ENCODE measurements at regions of chr3 and their contacts with region 1.

Region 1: GRCh38 chr3:89098964-89099585 is 8.3 kb upstream of the EPHA3 start:
- DNase-seq: peak; percentile 79
- ATAC-seq: peak; percentile 73
- H3K4me3 ChIP-seq: no peak overlapping the region
- H3K27ac ChIP-seq: no peak overlapping the region
- H3K4me1 ChIP-seq: 0 out of 2 replicates have a peak, but pooled peaks cover 3% of the 10 kb centered on the region
- H3K27me3 ChIP-seq: peaks cover 6% of the 10 kb centered on the region; the same call in 1 of the 2 replicates
- CTCF ChIP-seq: peak; percentile 96

Region 2: DNA sequence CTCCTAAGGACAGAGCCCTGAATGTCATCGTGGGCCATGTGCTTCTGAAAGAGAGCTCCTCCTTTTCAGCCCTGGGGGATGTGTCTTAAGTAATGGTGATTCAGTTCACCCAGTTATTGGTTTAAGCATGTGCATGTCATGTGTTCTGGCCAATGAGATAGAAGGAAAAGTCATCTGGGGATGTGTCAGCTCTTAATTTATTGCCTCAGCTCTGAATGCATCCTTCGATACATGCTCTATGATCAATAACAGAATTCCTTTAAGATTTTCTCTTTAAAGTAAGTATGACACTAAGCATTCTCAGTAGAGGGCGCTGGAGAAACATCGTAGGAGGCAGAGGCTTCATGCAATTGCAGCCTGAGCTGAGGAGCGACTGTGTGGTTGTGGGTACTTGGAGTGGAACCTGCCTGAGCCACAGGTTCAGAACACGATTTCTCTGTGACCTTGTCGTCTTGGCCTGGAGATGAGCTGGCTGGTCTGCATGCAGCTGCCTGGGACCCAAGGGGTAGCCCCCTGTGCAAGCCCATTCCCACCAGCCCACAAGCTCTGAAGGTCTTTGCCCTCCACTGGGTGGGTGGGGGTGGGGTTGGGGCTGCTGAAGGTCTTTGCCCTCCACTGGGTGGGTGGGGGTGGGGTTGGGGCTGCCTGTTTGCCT is 879.8 kb before region 1 on chr3:
- CTCF ChIA-PET with region 1: no interaction called
- POLR2A ChIA-PET with region 1: no interaction called
- intact Hi-C with region 1: loop called (anchors 5 kb)
- DNase-seq: peak; percentile 76
- ATAC-seq: peak; percentile 82
- H3K4me3 ChIP-seq: no peak overlapping the region
- H3K27ac ChIP-seq: no peak overlapping the region
- H3K4me1 ChIP-seq: no peaks in the 10 kb centered on the region
- H3K27me3 ChIP-seq: peaks cover 15% of the 10 kb centered on the region; the same call in 1 of the 2 replicates
- CTCF ChIP-seq: peak; percentile 82

Region 3: DNA sequence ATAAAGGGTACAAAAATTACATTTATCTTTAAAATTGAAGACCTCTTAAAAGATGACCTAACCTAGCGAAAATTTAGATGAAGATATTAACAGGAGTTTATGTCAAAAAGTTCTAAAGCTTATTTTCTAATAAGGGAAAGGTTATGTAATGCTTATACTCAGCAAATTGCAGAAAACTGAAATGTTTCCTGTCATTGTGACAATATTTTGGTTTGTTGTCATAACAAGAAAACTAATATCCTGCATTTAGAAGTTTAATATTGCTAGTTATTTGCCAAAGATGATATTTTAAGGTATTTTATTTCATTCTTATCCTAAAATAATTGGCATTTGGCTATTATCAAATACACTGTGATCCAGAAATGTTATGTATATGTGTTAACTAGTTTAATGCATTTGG is 654.8 kb before region 1 on chr3:
- CTCF ChIA-PET with region 1: no interaction called
- POLR2A ChIA-PET with region 1: no interaction called
- intact Hi-C with region 1: no loop called
- DNase-seq: no peak
- ATAC-seq: no peak
- H3K4me3 ChIP-seq: no peak overlapping the region
- H3K27ac ChIP-seq: no peak overlapping the region
- H3K4me1 ChIP-seq: no peaks in the 10 kb centered on the region
- H3K27me3 ChIP-seq: peaks cover 5% of the 10 kb centered on the region; the same call in 1 of the 2 replicates
- CTCF ChIP-seq: no peak

Region 4: DNA sequence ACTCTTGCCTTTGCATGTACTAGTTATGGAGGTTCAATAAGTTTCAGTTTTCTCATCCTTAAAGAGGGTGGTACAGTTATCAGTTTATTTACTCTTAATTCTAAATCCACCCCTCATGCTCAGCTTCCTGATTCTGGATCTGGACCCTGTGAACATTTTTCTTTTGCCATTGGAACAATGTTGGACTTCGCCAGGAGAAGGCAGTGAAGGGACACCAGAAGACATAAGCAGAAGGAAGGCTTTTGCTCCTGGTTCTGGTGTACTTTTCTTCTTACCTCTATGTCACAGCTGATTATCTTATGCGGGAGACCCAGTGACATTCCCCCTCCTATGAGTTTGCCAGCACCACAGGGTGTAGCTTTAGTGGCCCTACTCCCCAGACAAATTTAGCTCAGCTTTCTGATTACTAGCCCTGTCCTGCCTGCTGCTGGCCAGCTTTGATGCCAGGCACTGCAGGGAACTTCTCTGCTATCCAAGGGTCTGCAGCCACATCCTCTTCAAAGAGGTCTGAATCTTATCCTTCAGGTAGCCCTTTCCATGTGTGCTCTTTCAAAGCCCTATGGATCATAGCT is 458.0 kb before region 1 on chr3:
- CTCF ChIA-PET with region 1: no interaction called
- POLR2A ChIA-PET with region 1: no interaction called
- intact Hi-C with region 1: loop called (anchors 10 kb)
- DNase-seq: no peak
- ATAC-seq: no peak
- H3K4me3 ChIP-seq: no peak overlapping the region
- H3K27ac ChIP-seq: no peak overlapping the region
- H3K4me1 ChIP-seq: no peaks in the 10 kb centered on the region
- H3K27me3 ChIP-seq: no peaks in the 10 kb centered on the region
- CTCF ChIP-seq: no peak

Region 5: DNA sequence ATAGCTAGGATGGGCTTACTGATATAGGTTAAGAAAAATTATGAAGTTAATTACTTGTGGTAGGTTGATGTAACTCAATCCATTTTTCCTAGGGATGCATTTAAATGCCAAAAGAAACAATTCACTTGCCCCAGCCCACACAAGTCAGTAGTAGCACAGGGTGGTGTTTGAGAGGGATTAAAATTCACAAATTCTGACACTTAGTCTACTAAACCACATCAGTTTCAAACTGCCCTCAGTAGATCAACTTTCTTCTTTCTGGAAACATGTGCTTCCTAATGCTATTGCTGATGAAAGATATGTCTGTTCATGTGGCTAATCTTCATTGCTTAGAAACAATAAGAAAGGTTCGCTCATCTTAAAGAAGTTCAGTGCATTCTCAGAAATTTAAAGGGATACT is 169.0 kb after region 1 on chr3:
- CTCF ChIA-PET with region 1: no interaction called
- POLR2A ChIA-PET with region 1: no interaction called
- intact Hi-C with region 1: no loop called
- DNase-seq: no peak
- ATAC-seq: no peak
- H3K4me3 ChIP-seq: no peak overlapping the region
- H3K27ac ChIP-seq: no peak overlapping the region
- H3K4me1 ChIP-seq: no peaks in the 10 kb centered on the region
- H3K27me3 ChIP-seq: peaks cover 18% of the 10 kb centered on the region
- CTCF ChIP-seq: no peak